ENCODE measurements at regions of chr1 and their contacts with region 1.

Region 1: DNA sequence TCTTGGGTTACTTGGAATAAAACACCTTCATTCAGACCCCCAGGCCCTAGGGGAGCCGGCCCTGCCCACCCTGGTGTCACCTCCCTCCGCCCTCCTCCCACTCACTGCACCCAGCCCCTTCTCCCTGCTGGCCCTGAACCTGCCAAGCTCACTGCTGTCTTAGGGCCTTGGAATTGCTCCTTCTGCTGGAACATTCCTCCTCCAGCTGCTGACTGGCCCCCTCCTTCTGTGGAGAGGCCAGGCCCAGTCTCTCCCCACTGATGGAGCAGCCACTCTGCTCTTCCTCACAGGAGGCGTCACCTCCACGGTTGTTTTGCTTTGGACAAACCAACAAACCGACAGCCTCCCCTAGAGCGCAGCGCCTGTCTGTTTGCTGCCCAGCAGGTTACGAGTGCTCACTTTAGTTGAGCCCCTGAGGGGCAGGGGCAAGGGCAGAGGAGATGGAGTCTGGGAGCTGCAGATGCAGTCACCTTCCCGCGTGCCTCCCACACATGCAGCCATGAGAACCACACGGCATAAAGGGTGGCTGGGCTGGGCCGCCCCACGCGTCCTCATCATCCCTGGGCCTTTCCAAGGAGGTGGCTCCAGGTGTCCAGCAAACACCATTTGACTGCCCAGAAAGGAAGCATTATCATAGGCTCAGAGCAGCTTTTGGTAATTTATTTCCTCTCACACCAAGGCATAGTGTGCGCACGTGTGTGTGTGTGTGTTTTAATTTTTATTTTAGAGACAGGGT is 9.5 kb downstream of the OXCT2 start:
- DNase-seq: no peak
- ATAC-seq: no peak
- H3K4me3 ChIP-seq: no peak overlapping the region
- H3K27ac ChIP-seq: no peak overlapping the region
- H3K4me1 ChIP-seq: no peaks in the 10 kb centered on the region
- H3K27me3 ChIP-seq: no peaks in the 10 kb centered on the region
- CTCF ChIP-seq: no peak

Region 2: DNA sequence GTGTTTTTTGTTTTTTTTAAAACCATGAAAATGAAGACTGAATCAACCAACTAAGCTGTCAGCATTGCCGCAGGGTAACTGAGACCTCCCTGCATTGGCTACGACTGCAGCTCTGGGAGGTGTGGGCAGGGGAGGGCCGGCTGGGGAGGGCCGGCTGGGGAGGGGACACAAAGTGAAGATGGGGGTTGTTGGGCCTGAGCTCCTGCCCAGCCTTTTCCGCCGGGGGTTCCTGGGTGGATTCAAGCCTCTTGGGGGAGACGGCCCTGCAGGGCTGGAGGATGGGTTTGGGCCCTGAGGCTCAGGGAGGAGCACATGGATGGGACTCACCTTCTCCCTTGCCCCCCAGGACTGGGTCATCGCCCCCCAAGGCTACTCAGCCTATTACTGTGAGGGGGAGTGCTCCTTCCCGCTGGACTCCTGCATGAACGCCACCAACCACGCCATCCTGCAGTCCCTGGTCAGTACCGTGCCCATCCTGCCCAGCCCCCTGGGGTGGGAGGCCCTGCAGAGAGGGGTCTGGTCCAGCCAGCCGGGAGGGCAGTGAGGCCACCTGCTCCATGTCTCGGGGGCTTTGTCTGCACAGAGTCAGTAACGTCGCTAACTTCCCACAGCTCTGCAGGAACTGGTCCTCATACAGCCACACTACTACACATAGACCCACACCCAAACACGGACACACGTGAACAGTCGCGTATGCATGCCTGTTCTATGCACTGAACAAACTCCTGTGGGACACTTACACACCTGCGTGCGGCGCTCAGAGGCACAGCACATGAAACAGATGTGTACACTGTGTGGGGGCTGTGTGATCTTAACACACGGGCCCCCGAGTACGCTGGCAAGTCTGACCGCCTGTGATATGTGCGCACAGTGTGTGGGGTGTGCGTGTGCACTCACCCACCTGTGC is 238.8 kb before region 1 on chr1:
- CTCF ChIA-PET with region 1: no interaction called
- POLR2A ChIA-PET with region 1: no interaction called
- in situ Hi-C with region 1: no loop called
- intact Hi-C with region 1: loop called (anchors 5 kb)
- DNase-seq: no peak
- ATAC-seq: no peak
- H3K4me3 ChIP-seq: no peak overlapping the region
- H3K27ac ChIP-seq: no peak overlapping the region
- H3K4me1 ChIP-seq: no peaks in the 10 kb centered on the region
- H3K27me3 ChIP-seq: no peaks in the 10 kb centered on the region
- CTCF ChIP-seq: no peak

Measured in Panc1 (cell line).